ENCODE measurements at regions of chr5 and their contacts with region 1.

Region 1: DNA sequence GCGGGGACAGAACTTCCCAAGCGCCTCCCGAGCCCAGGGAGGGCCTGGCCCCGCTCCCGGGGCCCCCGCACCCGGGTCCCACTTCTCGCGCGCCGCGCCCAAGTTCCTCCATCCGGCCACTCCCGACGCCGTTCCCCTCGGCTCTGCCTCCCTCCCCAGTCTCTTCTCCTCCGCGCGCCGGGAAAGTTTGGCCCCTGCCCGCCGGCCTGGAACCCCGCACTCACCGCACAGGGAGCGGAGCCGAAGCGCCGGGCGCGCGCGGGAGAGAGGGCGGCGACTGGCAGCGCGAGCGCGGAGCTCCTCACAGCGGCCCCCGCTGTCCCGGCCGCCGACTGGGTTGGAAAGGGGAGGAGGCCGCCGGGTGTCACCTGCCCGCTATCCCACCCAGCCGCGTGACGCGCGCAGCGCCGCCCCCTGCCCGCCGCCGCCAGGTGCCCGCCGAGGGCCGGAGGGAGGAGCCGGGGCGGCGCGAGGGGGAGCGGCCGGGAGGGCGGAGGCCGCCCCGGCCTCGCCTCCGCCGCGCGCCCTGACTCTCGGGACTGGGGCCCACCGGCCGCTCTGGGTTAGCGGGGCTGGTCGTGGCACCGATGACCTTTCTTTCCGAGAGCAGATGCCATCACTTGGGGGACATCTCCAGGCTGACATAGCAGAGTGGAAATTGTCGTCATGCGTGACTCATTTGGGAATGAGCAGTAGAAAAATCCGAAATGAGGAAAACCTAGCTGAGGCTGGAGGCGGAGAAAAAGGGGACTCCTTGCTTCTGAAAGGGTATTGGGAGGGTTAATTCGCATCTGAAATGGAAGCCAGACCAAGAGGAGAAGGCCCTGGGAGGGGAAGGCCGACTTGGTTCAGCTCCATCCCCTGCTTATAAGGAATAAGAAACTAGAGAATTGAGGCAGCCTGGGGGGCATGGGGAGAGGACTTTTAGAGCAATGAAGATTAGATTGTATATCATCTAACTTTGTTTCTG is at the start of gene ELOVL7:
- DNase-seq: peak; percentile 83
- H3K4me3 ChIP-seq: peak within 1 kb of the TSS; percentile 78 to 93 (median 79)
- H3K27ac ChIP-seq: peak within 1 kb of the TSS; percentile 85
- H3K4me1 ChIP-seq: peaks cover 8% of the 10 kb centered on the region
- H3K27me3 ChIP-seq: no peaks in the 10 kb centered on the region
- CTCF ChIP-seq: peak; percentile 5 to 60
- total RNA-seq, gene ELOVL7: 17.8 to 21.0 TPM

Region 2: DNA sequence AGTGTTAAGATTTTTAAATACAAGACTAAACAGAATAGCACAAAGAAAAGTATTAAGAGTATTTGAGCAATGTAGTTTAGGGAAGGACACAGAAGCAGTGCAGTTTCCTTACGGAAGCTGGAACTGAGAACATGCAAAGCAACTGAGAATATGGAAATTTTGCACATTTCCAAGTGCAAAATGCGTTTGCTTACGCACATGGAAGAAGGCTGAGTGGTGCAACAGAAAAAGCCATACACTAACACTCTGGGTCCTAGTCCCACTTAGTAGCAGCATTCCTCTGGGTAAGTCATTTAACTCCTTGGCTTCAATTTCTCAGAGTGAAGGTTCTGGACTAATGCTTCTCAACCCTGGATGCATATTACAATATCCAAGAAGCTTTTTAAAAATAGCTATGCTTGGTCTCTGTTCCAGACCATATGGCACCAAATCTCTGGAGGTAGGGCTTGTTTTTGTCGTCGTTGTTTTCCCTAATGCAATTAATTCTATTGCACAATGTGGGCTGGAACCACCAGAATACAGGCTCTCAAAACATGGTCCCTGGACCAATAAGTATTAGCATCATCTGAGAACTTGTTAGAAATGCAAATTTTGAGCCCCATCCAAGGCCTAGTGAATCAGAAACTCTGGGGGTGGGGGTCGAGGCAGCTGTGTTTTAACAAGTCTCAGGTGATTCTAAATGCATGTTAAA is 79.1 kb before region 1 on chr5:
- CTCF ChIA-PET with region 1: no interaction called
- dilution Hi-C with region 1: no loop called
- in situ Hi-C with region 1: no loop called
- intact Hi-C with region 1: loop called (anchors 5 kb)
- DNase-seq: no peak
- H3K4me3 ChIP-seq: no peak overlapping the region
- H3K27ac ChIP-seq: no peak overlapping the region
- H3K4me1 ChIP-seq: no peaks in the 10 kb centered on the region
- H3K27me3 ChIP-seq: no peaks in the 10 kb centered on the region
- CTCF ChIP-seq: no peak

Region 3: GRCh38 chr5:60805470-60805869 is 38.8 kb before region 1 on chr5:
- CTCF ChIA-PET with region 1: no interaction called
- dilution Hi-C with region 1: no loop called
- in situ Hi-C with region 1: no loop called
- intact Hi-C with region 1: loop called (anchors 1 kb)
- DNase-seq: peak; percentile 67
- H3K4me3 ChIP-seq: no peak overlapping the region
- H3K27ac ChIP-seq: peak overlapping the region; percentile 4
- H3K4me1 ChIP-seq: peaks cover 15% of the 10 kb centered on the region
- H3K27me3 ChIP-seq: no peaks in the 10 kb centered on the region
- CTCF ChIP-seq: no peak